H1 (cell line): ENCODE measurements at regions of chr10 and their contacts with region 1.

Region 1: GRCh38 chr10:86733260-86733671 is 23.2 kb upstream of the BMPR1A start:
- DNase-seq: no peak
- H3K4me3 ChIP-seq: no peak overlapping the region
- H3K27ac ChIP-seq: no peak overlapping the region
- H3K4me1 ChIP-seq: peaks cover 0 to 4% (median 0%) of the 10 kb centered on the region in 4 experiments; a peak in 2 of 7 replicates
- H3K27me3 ChIP-seq: no peaks in the 10 kb centered on the region
- CTCF ChIP-seq: no peak
- EP300 ChIP-seq: no peak
- POLR2A ChIP-seq: no peak
- RAD21 ChIP-seq: no peak

Region 2: DNA sequence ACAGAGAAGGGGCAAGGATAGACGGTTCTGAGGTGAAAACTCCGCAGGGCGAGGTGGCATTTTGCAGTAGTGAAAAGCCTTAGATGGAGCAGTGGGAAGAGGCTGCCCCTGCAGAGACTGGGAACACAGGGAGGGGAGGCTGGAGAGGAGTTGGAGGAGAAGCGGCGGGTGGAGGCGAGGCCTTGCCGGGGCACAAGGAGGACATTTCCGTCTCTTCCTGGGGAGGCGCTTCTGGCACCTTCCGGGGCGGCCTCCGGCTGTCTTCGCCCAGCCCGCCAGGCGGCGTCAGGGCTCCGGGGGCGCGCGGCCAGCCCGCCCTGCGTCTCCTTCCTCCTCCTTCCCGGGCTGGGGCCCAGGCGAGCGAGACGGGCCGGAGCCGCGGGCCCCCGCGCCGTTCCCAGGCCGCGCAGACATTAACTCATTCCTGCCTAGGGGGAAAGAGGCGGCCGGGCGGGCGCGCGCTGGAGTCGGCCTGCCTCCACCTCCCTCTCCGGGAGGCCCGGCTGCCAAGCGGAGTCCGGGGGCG is 22.2 kb before region 1 on chr10:
- CTCF ChIA-PET with region 1: interaction called, 10 read pairs
- POLR2A ChIA-PET with region 1: interaction called, 3 read pairs
- DNase-seq: peak; percentile 68 to 92
- H3K4me3 ChIP-seq: peak overlapping the region; percentile 46 to 67 (median 54)
- H3K27ac ChIP-seq: no peak overlapping the region; the same call in 1 of the 2 replicates
- H3K4me1 ChIP-seq: peaks cover 3 to 28% (median 12%) of the 10 kb centered on the region in 4 experiments
- H3K27me3 ChIP-seq: no peaks in the 10 kb centered on the region
- CTCF ChIP-seq: peak; percentile 68 to 97 (median 80)
- EP300 ChIP-seq: no peak
- POLR2A ChIP-seq: peak in 1 of 2 experiments; percentile 64; a peak in 2 of 3 replicates
- RAD21 ChIP-seq: peak; percentile 72 to 80

Region 3: DNA sequence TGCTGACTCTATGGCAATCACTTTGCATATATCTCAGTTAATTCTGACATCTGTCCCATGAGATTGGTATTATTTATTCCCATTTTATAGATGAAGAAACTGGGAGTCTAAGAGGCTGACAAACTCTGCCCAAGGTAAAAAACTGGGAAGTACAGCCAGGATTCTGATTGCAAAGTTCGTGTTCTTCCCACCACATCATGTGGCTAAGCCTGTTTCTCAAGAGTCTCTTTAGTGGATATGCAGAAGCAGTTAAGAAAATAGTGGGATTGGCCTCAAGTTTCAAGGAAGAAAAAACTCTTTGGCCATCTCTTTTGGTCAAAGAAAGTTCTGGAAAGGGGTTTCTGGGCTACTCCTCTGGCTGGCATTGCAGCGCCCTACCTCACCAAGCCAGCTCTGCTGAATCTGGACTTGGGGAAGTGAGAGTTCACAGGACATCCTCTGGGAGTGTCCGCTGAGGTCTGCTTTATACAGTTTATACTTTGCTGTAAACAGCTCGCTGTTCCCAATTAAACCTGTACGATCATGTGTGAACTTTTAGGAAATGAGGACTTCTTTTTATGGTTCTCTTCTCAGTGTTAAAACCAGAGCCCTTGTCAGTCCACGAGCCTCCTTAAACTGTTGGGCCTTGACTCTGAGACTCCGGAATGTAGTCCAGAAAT is 10.9 kb after region 1 on chr10:
- CTCF ChIA-PET with region 1: interaction called, 17 read pairs
- POLR2A ChIA-PET with region 1: interaction called, 3 read pairs
- DNase-seq: no peak
- H3K4me3 ChIP-seq: no peak overlapping the region
- H3K27ac ChIP-seq: no peak overlapping the region
- H3K4me1 ChIP-seq: peaks cover 0 to 3% (median 0%) of the 10 kb centered on the region in 4 experiments; a peak in 1 of 7 replicates
- H3K27me3 ChIP-seq: no peaks in the 10 kb centered on the region
- CTCF ChIP-seq: no peak
- EP300 ChIP-seq: no peak
- POLR2A ChIP-seq: no peak
- RAD21 ChIP-seq: no peak